Heart right ventricle (tissue), 16 donors: ENCODE measurements at regions of chr19 and their contacts with region 1.

Region 1: GRCh38 chr19:35716801-35717666 is 769 bp upstream of the KMT2B start:
- DNase-seq: peak; percentile 95 to 96
- ATAC-seq: peak; percentile 93 to 97 (median 95)
- H3K4me3 ChIP-seq: peak overlapping the region; percentile 36 to 98 (median 82)
- H3K27ac ChIP-seq: peak overlapping the region; percentile 78 to 97 (median 92)
- H3K4me1 ChIP-seq: peaks cover 6 to 34% (median 27%) of the 10 kb centered on the region in 9 donors
- H3K27me3 ChIP-seq: no peaks in the 10 kb centered on the region
- CTCF ChIP-seq: peak; percentile 77 to 96 (median 93)

Region 2: GRCh38 chr19:35545001-35545911 is 171.8 kb before region 1 on chr19 and contains the start of gene TMEM147:
- intact Hi-C with region 1: loop called in 8 of 10 experiments (anchors 2 to 10 kb)
- DNase-seq: peak; percentile 93 to 95
- ATAC-seq: peak; percentile 97 to 99 (median 99)
- H3K4me3 ChIP-seq: peak within 1 kb of the TSS; percentile 53 to 97 (median 88)
- H3K27ac ChIP-seq: peak within 1 kb of the TSS in 9 of 10 donors; percentile 61 to 94 (median 83)
- H3K4me1 ChIP-seq: peaks cover 0 to 24% (median 21%) of the 10 kb centered on the region in 9 donors
- H3K27me3 ChIP-seq: no peaks in the 10 kb centered on the region
- CTCF ChIP-seq: no peak
- total RNA-seq, gene TMEM147: 62.8 to 103 (median 74.7) TPM

Region 3: GRCh38 chr19:35693830-35694599 is 23.0 kb before region 1 on chr19:
- intact Hi-C with region 1: loop called in 7 of 10 experiments (anchors 1 to 2 kb)
- DNase-seq: peak; percentile 81 to 88
- ATAC-seq: peak; percentile 97 to 100 (median 98)
- H3K4me3 ChIP-seq: no peak overlapping the region
- H3K27ac ChIP-seq: peak overlapping the region in 1 of 10 donors; percentile 41
- H3K4me1 ChIP-seq: peaks cover 0 to 4% (median 0%) of the 10 kb centered on the region in 9 donors
- H3K27me3 ChIP-seq: peaks cover 0 to 6% (median 0%) of the 10 kb centered on the region in 7 donors
- CTCF ChIP-seq: peak; percentile 93 to 99 (median 96)

Region 4: GRCh38 chr19:35748106-35749020 is 31.3 kb after region 1 on chr19 and contains the start of gene LIN37:
- intact Hi-C with region 1: loop called in 3 of 10 experiments (anchors 2 to 5 kb)
- DNase-seq: peak; percentile 98 to 99
- ATAC-seq: peak; percentile 79 to 90 (median 87)
- H3K4me3 ChIP-seq: peak within 1 kb of the TSS; percentile 67 to 97 (median 88)
- H3K27ac ChIP-seq: peak within 1 kb of the TSS; percentile 54 to 93 (median 84)
- H3K4me1 ChIP-seq: peaks cover 7 to 63% (median 44%) of the 10 kb centered on the region in 9 donors
- H3K27me3 ChIP-seq: no peaks in the 10 kb centered on the region
- CTCF ChIP-seq: peak in 6 of 9 donors; percentile 5 to 38 (median 21)
- total RNA-seq, gene LIN37: 4.0 to 9.3 (median 4.8) TPM